Activated T-helper 1 cell treated with anti-CD3 and anti-CD28 coated beads, Interleukin-12 subunit alpha, Interleukin-12 subunit beta, Interleukin-2, Interleukin-4 antibody, amounts not matched to agents 30 ng/mL and 10 ng/mL and 1 ng/mL, durations not matched to agents 14 hours and 24 hours and 36 hours (primary cell): ENCODE measurements at regions of chr12 and their contacts with region 1.

Region 1: GRCh38 chr12:6851921-6852650 is at the start of gene USP5:
- DNase-seq: peak; percentile 98
- H3K4me3 Mint-ChIP-seq: peak within 1 kb of the TSS; percentile 91
- H3K27ac Mint-ChIP-seq: peak within 1 kb of the TSS; percentile 96
- H3K4me1 Mint-ChIP-seq: peaks cover 46% of the 10 kb centered on the region
- H3K27me3 Mint-ChIP-seq: peaks cover 2% of the 10 kb centered on the region
- total RNA-seq, gene USP5: 116 and 127 TPM in 2 replicates

Region 2: GRCh38 chr12:6563448-6564050 is 288.5 kb before region 1 on chr12:
- intact Hi-C with region 1: loop called (anchors 1 kb)
- DNase-seq: peak; percentile 47
- H3K4me3 Mint-ChIP-seq: no peak overlapping the region
- H3K27ac Mint-ChIP-seq: peak overlapping the region; percentile 24
- H3K4me1 Mint-ChIP-seq: peaks cover 28% of the 10 kb centered on the region
- H3K27me3 Mint-ChIP-seq: no peaks in the 10 kb centered on the region

Region 3: DNA sequence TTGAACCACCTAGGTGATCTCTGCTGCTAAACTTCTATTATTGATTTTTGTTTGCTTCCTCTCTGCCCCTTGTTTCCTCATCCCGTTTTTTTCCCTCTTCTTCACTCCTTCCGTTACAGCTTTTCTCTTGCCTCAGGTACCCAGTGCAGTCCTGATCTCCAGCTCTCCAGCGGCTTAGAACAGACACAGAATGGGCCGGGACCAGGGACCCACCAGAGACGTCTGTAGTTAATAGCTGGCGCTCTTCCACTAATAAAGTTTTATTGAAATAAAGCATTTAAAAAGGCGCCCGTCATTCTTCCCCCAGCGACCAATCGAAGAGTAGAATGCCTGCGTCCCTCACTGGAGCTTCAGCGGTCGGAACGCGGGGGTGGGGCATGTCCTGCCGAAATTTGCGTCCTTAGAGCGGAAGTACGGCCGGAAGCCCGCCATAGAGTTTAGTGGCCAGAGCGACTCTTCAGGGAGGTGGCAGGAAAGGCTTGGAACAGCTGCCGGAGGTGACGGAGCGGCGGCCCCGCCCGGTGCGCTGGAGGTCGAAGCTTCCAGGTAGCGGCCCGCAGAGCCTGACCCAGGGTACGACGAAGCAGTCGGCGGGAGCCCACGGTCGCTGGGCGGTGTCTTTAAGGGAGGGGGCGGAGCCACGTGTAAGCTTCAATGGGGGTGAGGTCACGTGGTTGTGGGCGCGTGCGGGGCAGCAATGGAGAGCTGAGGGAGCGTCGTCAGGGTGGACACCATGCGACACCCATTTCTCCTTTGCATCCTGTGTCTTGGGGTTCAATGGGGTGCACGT is 128.3 kb before region 1 on chr12 and contains the start of gene COPS7A:
- intact Hi-C with region 1: loop called (anchors 1 kb)
- DNase-seq: peak; percentile 98
- H3K4me3 Mint-ChIP-seq: peak within 1 kb of the TSS; percentile 92
- H3K27ac Mint-ChIP-seq: peak within 1 kb of the TSS; percentile 91
- H3K4me1 Mint-ChIP-seq: peaks cover 33% of the 10 kb centered on the region
- H3K27me3 Mint-ChIP-seq: no peaks in the 10 kb centered on the region
- total RNA-seq, gene COPS7A: 34.6 and 36.2 TPM in 2 replicates

Region 4: GRCh38 chr12:6825398-6826124 is 26.5 kb before region 1 on chr12:
- intact Hi-C with region 1: loop called (anchors 1 kb)
- DNase-seq: peak; percentile 72
- H3K4me3 Mint-ChIP-seq: peak overlapping the region; percentile 40
- H3K27ac Mint-ChIP-seq: peak overlapping the region; percentile 59
- H3K4me1 Mint-ChIP-seq: peaks cover 46% of the 10 kb centered on the region
- H3K27me3 Mint-ChIP-seq: peaks cover 46% of the 10 kb centered on the region

Region 5: GRCh38 chr12:6890789-6891645 is 38.9 kb after region 1 on chr12:
- intact Hi-C with region 1: loop called (anchors 1 kb)
- DNase-seq: peak; percentile 98
- H3K4me3 Mint-ChIP-seq: peak overlapping the region; percentile 84
- H3K27ac Mint-ChIP-seq: peak overlapping the region; percentile 95
- H3K4me1 Mint-ChIP-seq: peaks cover 19% of the 10 kb centered on the region
- H3K27me3 Mint-ChIP-seq: no peaks in the 10 kb centered on the region

Region 6: DNA sequence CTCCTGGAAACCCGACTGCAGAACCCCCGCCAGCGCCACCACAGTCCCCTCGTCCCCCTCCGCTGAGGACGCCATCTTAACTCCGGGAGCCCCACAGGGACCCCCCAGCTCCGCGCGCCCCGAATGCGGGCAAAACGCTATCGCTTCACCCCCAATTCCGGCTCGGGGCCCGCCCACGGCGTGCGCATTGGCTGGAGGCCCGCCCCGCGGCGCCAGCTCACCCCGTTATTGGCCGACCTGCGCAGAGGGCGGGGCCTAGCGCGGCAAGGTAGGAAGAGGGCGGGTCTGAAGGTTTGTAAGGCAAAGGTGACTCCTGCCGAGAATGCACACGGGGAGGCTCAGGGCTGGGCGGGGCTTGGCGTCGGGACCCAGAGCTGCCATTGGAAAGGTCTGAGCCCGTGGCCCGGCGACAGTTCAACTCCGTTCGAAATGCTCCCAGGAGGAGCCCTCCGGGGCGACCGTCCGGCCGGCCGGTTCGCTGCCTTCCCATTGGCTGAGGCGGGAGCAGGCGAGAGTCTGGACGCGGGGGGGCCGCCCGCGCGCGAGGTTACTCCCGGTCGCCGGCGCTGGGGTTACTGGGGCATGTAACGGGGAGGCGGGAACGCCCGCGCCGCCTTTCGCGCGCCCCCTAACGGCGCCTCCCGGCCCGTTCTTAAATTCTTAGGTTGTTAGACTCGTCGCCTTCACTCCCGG is 166.4 kb after region 1 on chr12 and contains the start of gene LPCAT3:
- intact Hi-C with region 1: loop called (anchors 1 kb)
- DNase-seq: peak; percentile 98
- H3K4me3 Mint-ChIP-seq: peak within 1 kb of the TSS; percentile 93
- H3K27ac Mint-ChIP-seq: peak within 1 kb of the TSS; percentile 95
- H3K4me1 Mint-ChIP-seq: peaks cover 36% of the 10 kb centered on the region
- H3K27me3 Mint-ChIP-seq: no peaks in the 10 kb centered on the region
- total RNA-seq, gene LPCAT3: 27.9 and 30.0 TPM in 2 replicates